ENCODE measurements at regions of chr4 and their contacts with region 1.

Region 1: GRCh38 chr4:48085821-48086607 is 48.0 kb downstream of the TXK start:
- DNase-seq: no peak
- H3K4me3 ChIP-seq: no peak overlapping the region
- H3K27ac ChIP-seq: no peak overlapping the region
- H3K4me1 ChIP-seq: no peaks in the 10 kb centered on the region
- H3K27me3 ChIP-seq: no peaks in the 10 kb centered on the region
- CTCF ChIP-seq: no peak

Region 2: GRCh38 chr4:47926639-47927258 is 159.3 kb before region 1 on chr4:
- intact Hi-C with region 1: loop called (anchors 5 kb)
- DNase-seq: no peak
- H3K4me3 ChIP-seq: peak overlapping the region; percentile 2 to 3
- H3K27ac ChIP-seq: no peak overlapping the region
- H3K4me1 ChIP-seq: peaks cover 0 to 4% of the 10 kb centered on the region in 2 donors
- H3K27me3 ChIP-seq: no peaks in the 10 kb centered on the region
- CTCF ChIP-seq: peak; percentile 32 to 73 (median 58)

Region 3: GRCh38 chr4:48008021-48008596 is 77.9 kb before region 1 on chr4:
- intact Hi-C with region 1: loop called (anchors 1 kb)
- DNase-seq: no peak
- H3K4me3 ChIP-seq: no peak overlapping the region
- H3K27ac ChIP-seq: no peak overlapping the region
- H3K4me1 ChIP-seq: no peaks in the 10 kb centered on the region
- H3K27me3 ChIP-seq: no peaks in the 10 kb centered on the region
- CTCF ChIP-seq: no peak

Region 4: GRCh38 chr4:48016141-48017103 is 69.6 kb before region 1 on chr4 and contains the starts of genes CNGA1 and NIPAL1:
- intact Hi-C with region 1: loop called (anchors 5 kb)
- DNase-seq: peak in 1 of 2 donors; percentile 85
- H3K4me3 ChIP-seq: peak within 1 kb of the TSS; percentile 61 to 69
- H3K27ac ChIP-seq: peak within 1 kb of the TSS in 1 of 2 donors; percentile 23
- H3K4me1 ChIP-seq: peaks cover 0 to 2% of the 10 kb centered on the region in 2 donors
- H3K27me3 ChIP-seq: no peaks in the 10 kb centered on the region
- CTCF ChIP-seq: peak in 1 of 3 experiments; percentile 31
- total RNA-seq, gene CNGA1: not detected
- total RNA-seq, gene NIPAL1: 2.0 TPM

Region 5: GRCh38 chr4:48223633-48224295 is 137.8 kb after region 1 on chr4:
- intact Hi-C with region 1: no loop called
- DNase-seq: no peak
- H3K4me3 ChIP-seq: no peak overlapping the region
- H3K27ac ChIP-seq: no peak overlapping the region
- H3K4me1 ChIP-seq: no peaks in the 10 kb centered on the region
- H3K27me3 ChIP-seq: no peaks in the 10 kb centered on the region
- CTCF ChIP-seq: no peak

Region 6: GRCh38 chr4:48340965-48341775 is 255.2 kb after region 1 on chr4 and contains the start of gene SLAIN2:
- intact Hi-C with region 1: no loop called
- DNase-seq: peak; percentile 96 to 100
- H3K4me3 ChIP-seq: peak within 1 kb of the TSS; percentile 86 to 93
- H3K27ac ChIP-seq: peak within 1 kb of the TSS; percentile 98 to 99
- H3K4me1 ChIP-seq: peaks cover 11 to 14% of the 10 kb centered on the region in 2 donors
- H3K27me3 ChIP-seq: no peaks in the 10 kb centered on the region
- CTCF ChIP-seq: peak; percentile 26 to 51 (median 35)
- total RNA-seq, gene SLAIN2: 26.3 TPM

Region 7: GRCh38 chr4:48490012-48490679 is 404.1 kb after region 1 on chr4 and contains the start of gene ZAR1:
- intact Hi-C with region 1: no loop called
- DNase-seq: no peak
- H3K4me3 ChIP-seq: peak within 1 kb of the TSS; percentile 49 to 56
- H3K27ac ChIP-seq: no peak within 1 kb of the TSS
- H3K4me1 ChIP-seq: peaks cover 0 to 5% of the 10 kb centered on the region in 2 donors
- H3K27me3 ChIP-seq: peaks cover 9% of the 10 kb centered on the region
- CTCF ChIP-seq: no peak
- total RNA-seq, gene ZAR1: 1.4 TPM

Measured in ascending aorta (tissue), 2 donors.